AG04450 (cell line): ENCODE measurements at regions of chr4 and their contacts with region 1.

Region 1: GRCh38 chr4:102430461-102430910 is 70.7 kb upstream of the NFKB1 start:
- DNase-seq: no peak
- H3K4me3 ChIP-seq: peak overlapping the region; percentile 62
- H3K27ac ChIP-seq: no peak overlapping the region
- H3K27me3 ChIP-seq: no peaks in the 10 kb centered on the region
- CTCF ChIP-seq: no peak

Region 2: GRCh38 chr4:101972791-101973190 is 457.7 kb before region 1 on chr4:
- CTCF ChIA-PET with region 1: no interaction called
- POLR2A ChIA-PET with region 1: no interaction called
- DNase-seq: no peak
- H3K4me3 ChIP-seq: no peak overlapping the region
- H3K27ac ChIP-seq: no peak overlapping the region
- H3K27me3 ChIP-seq: no peaks in the 10 kb centered on the region
- CTCF ChIP-seq: no peak

Region 3: DNA sequence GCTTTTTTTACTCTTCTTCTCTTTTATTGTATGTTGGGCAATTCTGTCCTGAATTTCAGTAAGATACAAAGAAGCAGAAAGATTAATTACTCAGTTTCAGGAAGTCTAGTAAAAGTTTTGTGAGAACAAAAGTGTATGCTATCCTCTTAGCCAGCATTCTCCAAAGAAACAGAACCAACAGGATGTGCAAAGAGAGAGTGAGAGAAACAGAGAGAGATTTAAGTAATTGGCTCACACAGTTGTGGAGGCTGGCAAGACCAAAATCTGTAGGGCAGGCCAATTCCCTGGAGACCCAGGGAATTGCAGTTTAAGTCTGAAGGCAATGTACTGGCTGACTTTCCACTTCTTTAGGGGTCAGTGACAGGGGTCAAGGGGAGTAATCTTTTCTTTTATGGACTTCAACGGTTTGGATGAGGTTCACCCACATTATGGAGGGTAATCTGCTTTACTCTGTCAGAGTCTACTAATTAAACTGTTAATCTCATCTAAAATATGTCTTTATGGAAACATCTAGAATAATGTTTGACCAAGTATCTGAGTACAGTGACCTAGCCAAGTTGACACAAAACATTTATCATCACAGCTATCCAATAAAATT is 26.0 kb before region 1 on chr4:
- CTCF ChIA-PET with region 1: no interaction called
- POLR2A ChIA-PET with region 1: no interaction called
- DNase-seq: no peak
- H3K4me3 ChIP-seq: no peak overlapping the region
- H3K27ac ChIP-seq: no peak overlapping the region
- H3K27me3 ChIP-seq: peaks cover 3% of the 10 kb centered on the region
- CTCF ChIP-seq: no peak

Region 4: GRCh38 chr4:102449751-102450352 is 19.4 kb after region 1 on chr4:
- CTCF ChIA-PET with region 1: interaction called, 10 read pairs
- POLR2A ChIA-PET with region 1: no interaction called
- DNase-seq: peak; percentile 32
- H3K4me3 ChIP-seq: no peak overlapping the region
- H3K27ac ChIP-seq: no peak overlapping the region
- H3K27me3 ChIP-seq: peaks cover 2% of the 10 kb centered on the region
- CTCF ChIP-seq: peak; percentile 69

Region 5: DNA sequence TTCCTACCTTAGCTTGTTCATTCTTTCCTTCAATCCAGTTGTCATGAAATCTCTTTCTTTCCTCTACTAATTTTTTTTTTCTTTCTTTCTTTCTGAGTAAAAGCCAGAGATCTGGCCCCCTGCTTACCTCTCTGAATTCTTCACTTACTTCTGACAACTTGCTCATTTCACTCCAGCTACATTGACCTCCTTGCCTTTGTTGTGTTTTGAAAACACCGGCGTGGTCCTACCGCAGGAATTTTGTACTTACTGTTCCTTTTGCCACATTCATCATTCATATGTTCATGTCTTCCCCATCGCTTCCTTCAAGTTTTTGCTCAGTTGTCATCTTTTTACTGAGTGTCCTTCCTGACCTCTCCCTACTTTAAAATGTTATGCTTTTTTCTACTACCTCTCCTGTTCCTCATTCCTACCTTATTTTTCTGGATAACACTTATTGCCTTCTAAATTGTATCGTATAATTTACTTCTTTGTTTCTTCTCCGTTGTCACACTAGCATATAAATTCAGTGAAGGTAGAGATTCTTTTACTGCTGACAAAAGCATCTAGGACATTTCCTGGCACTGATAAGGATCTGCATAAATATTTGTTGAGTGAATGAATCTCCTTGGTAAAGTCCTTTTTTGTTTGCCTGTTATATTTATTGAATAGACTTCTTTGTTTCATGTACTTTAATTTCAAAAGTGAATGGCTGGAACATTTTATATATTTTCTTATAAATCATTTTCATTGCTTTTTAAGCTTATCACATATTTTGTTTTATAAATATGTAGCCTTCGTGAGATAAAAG is 145.1 kb after region 1 on chr4:
- CTCF ChIA-PET with region 1: interaction called, 10 read pairs
- POLR2A ChIA-PET with region 1: no interaction called
- DNase-seq: no peak
- H3K4me3 ChIP-seq: no peak overlapping the region
- H3K27ac ChIP-seq: no peak overlapping the region
- H3K27me3 ChIP-seq: no peaks in the 10 kb centered on the region
- CTCF ChIP-seq: no peak

Region 6: GRCh38 chr4:102868781-102869568 is 438.5 kb after region 1 on chr4 and contains the start of gene CISD2:
- CTCF ChIA-PET with region 1: interaction called, 10 read pairs
- POLR2A ChIA-PET with region 1: no interaction called
- DNase-seq: peak; percentile 61
- H3K4me3 ChIP-seq: peak within 1 kb of the TSS; percentile 91
- H3K27ac ChIP-seq: peak within 1 kb of the TSS; percentile 87
- H3K27me3 ChIP-seq: no peaks in the 10 kb centered on the region
- CTCF ChIP-seq: no peak
- polyA plus RNA-seq, gene CISD2: 23.2 and 30.6 TPM in 2 replicates

Region 7: GRCh38 chr4:103075901-103076739 is 645.6 kb after region 1 on chr4:
- CTCF ChIA-PET with region 1: interaction called, 11 read pairs
- POLR2A ChIA-PET with region 1: no interaction called
- DNase-seq: no peak
- H3K4me3 ChIP-seq: peak overlapping the region; percentile 70
- H3K27ac ChIP-seq: peak overlapping the region; percentile 74
- H3K27me3 ChIP-seq: no peaks in the 10 kb centered on the region
- CTCF ChIP-seq: no peak

Region 8: GRCh38 chr4:103268746-103269145 is 838.3 kb after region 1 on chr4:
- CTCF ChIA-PET with region 1: no interaction called
- POLR2A ChIA-PET with region 1: no interaction called
- DNase-seq: no peak
- H3K4me3 ChIP-seq: no peak overlapping the region
- H3K27ac ChIP-seq: no peak overlapping the region
- H3K27me3 ChIP-seq: no peaks in the 10 kb centered on the region
- CTCF ChIP-seq: no peak